Stomach (tissue), 19 donors: ENCODE measurements at regions of chr16 and their contacts with region 1.

Region 1: GRCh38 chr16:77971306-77972271 is 50.8 kb upstream of the CLEC3A start:
- DNase-seq: peak; percentile 83 to 91
- H3K4me3 ChIP-seq: no peak overlapping the region
- H3K27ac ChIP-seq: no peak overlapping the region
- H3K4me1 ChIP-seq: no peaks in the 10 kb centered on the region
- H3K27me3 ChIP-seq: peaks cover 0 to 15% (median 0%) of the 10 kb centered on the region in 3 donors
- CTCF ChIP-seq: peak in 5 of 7 experiments; percentile 57 to 78 (median 71)
- EP300 ChIP-seq: no peak
- POLR2A ChIP-seq: no peak

Region 2: GRCh38 chr16:77675464-77676324 is 295.9 kb before region 1 on chr16:
- intact Hi-C with region 1: loop called (anchors 5 kb)
- DNase-seq: peak; percentile 69 to 89
- H3K4me3 ChIP-seq: no peak overlapping the region
- H3K27ac ChIP-seq: no peak overlapping the region
- H3K4me1 ChIP-seq: peaks cover 0 to 6% (median 0%) of the 10 kb centered on the region in 4 donors
- H3K27me3 ChIP-seq: peaks cover 0 to 13% (median 0%) of the 10 kb centered on the region in 3 donors
- CTCF ChIP-seq: peak in 5 of 7 experiments; percentile 89 to 96 (median 91)
- EP300 ChIP-seq: no peak
- POLR2A ChIP-seq: no peak